ENCODE measurements at regions of chr7 and their contacts with region 1.

Region 1: DNA sequence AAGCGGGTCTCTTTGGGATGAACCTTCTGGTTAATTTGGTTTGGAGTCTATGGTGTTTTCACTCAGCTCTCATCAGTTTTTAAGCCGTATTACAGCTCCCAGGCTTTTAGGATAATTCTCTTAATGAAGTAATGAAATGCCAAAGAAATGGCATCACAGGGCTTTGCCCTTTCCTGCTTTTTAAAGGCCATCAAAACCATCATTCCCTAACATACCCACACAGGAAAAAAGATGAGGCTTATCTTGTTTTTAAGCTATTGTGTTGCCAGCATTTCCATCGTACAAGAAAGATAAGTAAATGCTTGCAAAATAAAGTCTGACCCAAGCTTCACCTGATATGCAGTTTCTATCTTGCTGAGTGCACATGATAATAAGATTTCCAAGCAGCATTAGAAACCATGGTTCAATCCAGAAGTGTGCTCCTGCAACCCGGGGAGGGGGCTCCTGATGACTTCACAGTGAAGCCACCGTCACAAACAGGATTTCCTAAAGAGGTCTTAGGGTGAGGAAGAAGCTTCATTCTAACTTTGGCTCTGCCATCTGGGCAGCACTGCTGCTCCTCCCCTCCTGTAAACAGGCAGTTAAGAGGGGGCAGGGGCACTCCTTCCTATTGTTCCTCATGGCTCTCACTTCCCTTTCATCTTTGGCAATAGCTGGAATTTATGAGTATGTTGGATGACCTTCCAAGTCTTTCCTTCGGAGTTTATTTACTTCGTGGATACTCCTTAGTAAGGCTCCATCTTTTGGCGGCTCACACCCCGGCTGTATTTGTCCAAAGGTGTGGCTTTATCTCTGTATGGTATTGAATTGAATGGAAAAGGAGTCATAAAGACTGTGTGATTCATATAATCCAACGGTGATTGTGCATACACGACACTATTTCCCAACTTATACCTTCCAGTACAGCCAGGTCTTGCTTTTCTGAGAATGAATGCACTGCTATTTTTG is 55.2 kb upstream of the FAM133B start:
- DNase-seq: peak; percentile 91
- ATAC-seq: peak; percentile 96
- H3K4me3 ChIP-seq: peak overlapping the region; percentile 33; the same call in 1 of the 2 replicates
- H3K27ac ChIP-seq: peak overlapping the region; percentile 82
- H3K4me1 ChIP-seq: peaks cover 40% of the 10 kb centered on the region
- H3K27me3 ChIP-seq: no peaks in the 10 kb centered on the region
- CTCF ChIP-seq: no peak

Region 2: GRCh38 chr7:92633211-92633906 is 12.0 kb before region 1 on chr7:
- CTCF ChIA-PET with region 1: no interaction called
- POLR2A ChIA-PET with region 1: no interaction called
- intact Hi-C with region 1: loop called (anchors 1 kb)
- DNase-seq: peak; percentile 91
- ATAC-seq: peak; percentile 80
- H3K4me3 ChIP-seq: peak overlapping the region; percentile 38; the same call in 1 of the 2 replicates
- H3K27ac ChIP-seq: peak overlapping the region; percentile 73
- H3K4me1 ChIP-seq: peaks cover 51% of the 10 kb centered on the region
- H3K27me3 ChIP-seq: no peaks in the 10 kb centered on the region
- CTCF ChIP-seq: no peak

Region 3: GRCh38 chr7:92691578-92691977 is 46.2 kb after region 1 on chr7:
- CTCF ChIA-PET with region 1: no interaction called
- POLR2A ChIA-PET with region 1: no interaction called
- intact Hi-C with region 1: no loop called
- DNase-seq: peak; percentile 81
- ATAC-seq: peak; percentile 77
- H3K4me3 ChIP-seq: no peak overlapping the region
- H3K27ac ChIP-seq: no peak overlapping the region
- H3K4me1 ChIP-seq: peaks cover 14% of the 10 kb centered on the region
- H3K27me3 ChIP-seq: no peaks in the 10 kb centered on the region
- CTCF ChIP-seq: peak; percentile 81